ENCODE measurements at regions of chr16 and their contacts with region 1.

Region 1: DNA sequence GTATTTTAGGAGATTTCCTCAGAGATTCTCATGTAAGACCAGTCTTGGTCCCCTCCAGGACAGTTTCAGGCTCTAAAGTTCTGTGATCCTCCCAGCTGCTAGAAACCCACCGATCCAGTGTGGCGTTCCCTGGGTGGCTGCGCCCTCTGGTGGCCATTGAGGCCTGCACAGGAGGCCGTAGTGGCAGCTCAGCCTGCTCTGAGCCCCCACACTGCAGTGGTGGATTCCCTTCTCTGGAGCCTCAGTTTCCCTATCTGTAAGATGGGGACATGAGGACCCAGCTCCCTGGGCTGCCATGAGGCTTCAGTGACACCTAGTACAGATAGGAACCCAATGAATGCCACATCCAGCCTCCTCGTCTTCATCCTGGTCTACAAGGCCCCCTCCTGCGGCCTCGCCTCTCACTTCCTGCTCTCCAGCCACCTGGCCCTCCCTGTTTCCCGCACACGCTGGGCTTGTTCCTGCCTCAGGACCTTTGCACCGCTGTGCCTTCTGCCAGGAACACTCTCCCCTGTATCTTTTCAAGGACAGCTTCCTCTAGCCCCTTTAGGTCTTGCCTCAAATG is 16.5 kb downstream of the CCDC102A start:
- DNase-seq: peak; percentile 75 to 89 (median 85)
- H3K4me3 ChIP-seq: no peak overlapping the region
- H3K27ac ChIP-seq: no peak overlapping the region
- H3K4me1 ChIP-seq: no peaks in the 10 kb centered on the region
- H3K27me3 ChIP-seq: no peaks in the 10 kb centered on the region
- CTCF ChIP-seq: peak; percentile 80 to 96 (median 83)
- EP300 ChIP-seq: no peak
- POLR2A ChIP-seq: no peak

Region 2: DNA sequence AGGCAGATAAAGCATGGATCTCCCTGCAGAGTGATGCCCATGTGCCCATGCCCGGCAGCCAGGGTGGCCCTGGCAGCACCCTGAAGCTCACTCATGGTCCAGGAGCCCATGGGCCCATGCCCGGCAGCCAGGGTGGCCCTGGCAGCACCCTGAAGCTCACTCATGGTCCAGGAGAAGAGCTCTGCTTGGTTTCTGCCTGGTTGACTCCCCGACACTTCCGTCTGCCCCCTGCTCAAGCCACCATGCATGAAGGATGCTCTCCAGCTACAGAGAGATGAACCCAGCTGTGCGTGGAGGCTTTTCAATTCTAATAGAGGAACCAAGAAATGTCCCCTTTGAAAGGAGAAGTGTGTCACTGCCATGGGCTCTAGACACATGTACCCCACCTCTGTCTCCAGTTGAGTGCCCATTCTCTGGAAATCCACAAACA is 106.6 kb before region 1 on chr16:
- intact Hi-C with region 1: loop called in 3 of 4 experiments (anchors 2 to 10 kb)
- DNase-seq: no peak
- H3K4me3 ChIP-seq: no peak overlapping the region
- H3K27ac ChIP-seq: no peak overlapping the region
- H3K4me1 ChIP-seq: peaks cover 1% of the 10 kb centered on the region
- H3K27me3 ChIP-seq: no peaks in the 10 kb centered on the region
- CTCF ChIP-seq: no peak
- EP300 ChIP-seq: no peak
- POLR2A ChIP-seq: no peak

Region 3: DNA sequence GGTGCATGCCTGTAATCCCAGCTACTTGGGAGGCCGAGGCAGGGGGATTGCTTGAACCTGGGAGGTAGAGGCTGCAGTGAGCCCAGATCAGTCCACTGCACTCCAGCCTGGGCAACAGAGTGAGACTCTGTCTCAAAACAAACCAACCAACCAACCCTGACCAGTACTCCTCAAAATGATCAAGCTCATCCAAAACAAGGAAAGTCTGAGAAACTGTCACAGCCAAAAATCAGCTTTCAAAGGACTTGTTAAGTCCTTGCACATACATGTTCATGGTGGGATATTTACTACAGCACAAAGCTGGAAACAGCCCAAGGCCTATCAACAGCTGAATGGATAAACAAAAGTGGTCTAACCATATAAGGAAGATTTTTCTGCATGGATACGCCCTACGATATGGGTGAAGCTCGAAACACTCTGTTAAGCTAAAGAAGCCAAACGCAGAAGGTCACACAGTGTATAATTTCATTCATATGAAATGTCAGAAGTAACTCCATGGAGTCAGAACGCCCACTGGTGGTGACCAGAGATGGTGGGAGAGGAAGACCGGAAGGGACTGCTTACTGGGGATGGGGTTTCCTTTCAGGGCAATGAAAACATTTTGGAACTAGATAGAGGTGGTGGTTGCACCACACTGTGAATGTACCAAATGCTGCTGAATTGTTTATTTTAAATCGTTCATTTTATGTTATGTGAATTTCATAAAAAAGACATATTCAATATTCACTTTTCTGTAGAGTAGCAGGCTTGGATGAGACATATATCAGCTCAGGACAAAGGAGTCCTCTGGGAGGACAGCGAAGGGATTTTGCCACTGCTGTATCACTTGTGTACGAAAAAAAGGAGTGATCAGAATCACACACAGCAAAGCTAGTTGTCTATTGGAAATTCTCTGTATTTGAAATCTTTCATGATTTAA is 97.6 kb before region 1 on chr16:
- intact Hi-C with region 1: loop called in 3 of 4 experiments (anchors 2 to 10 kb)
- DNase-seq: peak; percentile 31 to 64 (median 51)
- H3K4me3 ChIP-seq: no peak overlapping the region
- H3K27ac ChIP-seq: no peak overlapping the region
- H3K4me1 ChIP-seq: peaks cover 4% of the 10 kb centered on the region
- H3K27me3 ChIP-seq: no peaks in the 10 kb centered on the region
- CTCF ChIP-seq: peak in 1 of 3 donors; percentile 29
- EP300 ChIP-seq: no peak
- POLR2A ChIP-seq: no peak

Region 4: GRCh38 chr16:57462209-57462977 is 57.5 kb before region 1 on chr16 and contains the start of gene POLR2C:
- intact Hi-C with region 1: loop called in 1 of 4 experiments (anchors 10 kb)
- DNase-seq: peak; percentile 82 to 92 (median 87)
- H3K4me3 ChIP-seq: peak within 1 kb of the TSS; percentile 99
- H3K27ac ChIP-seq: peak within 1 kb of the TSS; percentile 56 to 76
- H3K4me1 ChIP-seq: peaks cover 11% of the 10 kb centered on the region
- H3K27me3 ChIP-seq: no peaks in the 10 kb centered on the region
- CTCF ChIP-seq: peak; percentile 91 to 96 (median 94)
- EP300 ChIP-seq: no peak
- POLR2A ChIP-seq: peak; percentile 92
- total RNA-seq, gene POLR2C: 54.9 to 96.9 (median 65.8) TPM